ENCODE measurements at regions of chr12 and their contacts with region 1.

Region 1: DNA sequence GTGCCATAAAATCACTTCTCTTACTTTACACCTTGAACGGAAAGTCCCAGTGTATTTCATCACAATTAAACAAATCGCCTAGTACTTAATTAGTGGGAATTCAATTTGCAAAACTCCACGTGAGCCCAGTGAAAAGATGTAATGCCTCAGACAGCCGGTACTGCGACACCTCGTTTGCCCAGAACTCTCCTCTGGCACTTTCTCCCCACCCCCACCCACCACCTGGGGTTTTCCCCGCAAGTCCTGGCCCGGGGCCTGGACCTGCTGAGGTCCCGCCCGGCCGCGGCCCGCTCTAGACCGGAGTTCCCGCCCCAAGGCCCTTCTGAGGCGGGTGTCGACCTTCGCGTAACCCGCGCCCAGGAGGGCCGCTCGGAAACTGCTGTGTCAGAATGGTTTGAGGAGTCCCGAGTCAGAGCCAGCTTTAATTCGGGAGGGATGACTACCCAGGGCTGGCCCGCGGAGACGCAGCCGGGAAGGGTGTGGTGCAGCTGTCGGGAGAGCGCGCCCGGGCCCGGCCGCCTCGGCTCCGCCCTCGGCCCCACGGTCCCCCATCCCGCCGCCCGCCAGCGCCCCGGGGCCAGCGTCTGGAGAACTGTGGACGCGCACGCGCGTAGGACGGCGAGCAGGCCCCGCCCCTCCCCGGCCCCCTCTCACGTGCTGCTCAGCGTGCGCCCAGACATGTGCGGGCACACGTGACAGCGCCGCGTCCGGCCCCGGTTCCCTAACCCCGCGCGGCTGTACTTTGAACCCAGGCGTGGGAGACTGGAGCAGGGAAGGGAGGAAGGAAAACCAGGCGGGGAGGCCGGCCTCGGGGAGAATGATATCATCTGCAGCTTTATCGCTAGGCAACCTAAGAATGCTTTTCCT is 10.8 kb downstream of the BHLHE41 start:
- DNase-seq: peak; percentile 91
- H3K4me3 Mint-ChIP-seq: peak overlapping the region; percentile 71
- H3K27ac Mint-ChIP-seq: peak overlapping the region; percentile 79
- H3K4me1 Mint-ChIP-seq: peaks cover 29% of the 10 kb centered on the region
- H3K27me3 Mint-ChIP-seq: no peaks in the 10 kb centered on the region
- CTCF ChIP-seq: peak; percentile 23

Region 2: GRCh38 chr12:26153421-26154154 is 39.5 kb after region 1 on chr12:
- CTCF ChIA-PET with region 1: no interaction called
- intact Hi-C with region 1: no loop called
- DNase-seq: peak; percentile 49
- H3K4me3 Mint-ChIP-seq: no peak overlapping the region
- H3K27ac Mint-ChIP-seq: peak overlapping the region; percentile 6
- H3K4me1 Mint-ChIP-seq: peaks cover 52% of the 10 kb centered on the region
- H3K27me3 Mint-ChIP-seq: no peaks in the 10 kb centered on the region
- CTCF ChIP-seq: no peak

Region 3: DNA sequence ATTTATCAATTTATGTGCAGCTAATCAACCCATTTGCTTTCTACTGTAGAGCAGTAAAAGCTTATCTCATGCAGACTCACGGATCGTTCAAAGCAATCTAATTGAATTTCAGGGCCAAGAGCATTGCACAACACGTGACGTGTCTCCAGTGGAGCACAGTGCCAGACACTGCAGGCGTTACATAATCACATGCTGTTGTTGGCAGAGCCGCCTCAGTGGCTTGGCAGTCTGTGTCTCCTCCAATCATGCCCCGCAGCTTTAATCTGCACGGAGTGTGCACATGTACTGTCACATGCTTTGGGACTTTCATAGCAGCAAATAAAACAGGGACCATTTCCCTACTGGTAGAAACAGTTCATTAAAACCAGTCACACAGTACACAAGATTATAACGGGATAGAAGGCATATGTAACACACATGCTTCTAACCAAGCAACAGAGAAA is 409.6 kb after region 1 on chr12:
- CTCF ChIA-PET with region 1: interaction called, 5 read pairs
- intact Hi-C with region 1: loop called (anchors 5 kb)
- DNase-seq: peak; percentile 65
- H3K4me3 Mint-ChIP-seq: no peak overlapping the region
- H3K27ac Mint-ChIP-seq: no peak overlapping the region
- H3K4me1 Mint-ChIP-seq: peaks cover 10% of the 10 kb centered on the region
- H3K27me3 Mint-ChIP-seq: peaks cover 6% of the 10 kb centered on the region
- CTCF ChIP-seq: no peak

Measured in Calu3 (cell line).